Left cardiac atrium (tissue), 4 donors: ENCODE measurements at regions of chrX and their contacts with region 1.

Region 1: GRCh38 chrX:40647307-40648197 is at the start of gene CXorf38:
- DNase-seq: peak; percentile 95
- ATAC-seq: peak; percentile 91 to 92
- total RNA-seq, gene CXorf38: 6.7 to 8.2 TPM

Region 2: GRCh38 chrX:40459571-40460158 is 187.9 kb before region 1 on chrX:
- intact Hi-C with region 1: no loop called
- DNase-seq: no peak
- ATAC-seq: peak in 1 of 2 donors; percentile 22

Region 3: DNA sequence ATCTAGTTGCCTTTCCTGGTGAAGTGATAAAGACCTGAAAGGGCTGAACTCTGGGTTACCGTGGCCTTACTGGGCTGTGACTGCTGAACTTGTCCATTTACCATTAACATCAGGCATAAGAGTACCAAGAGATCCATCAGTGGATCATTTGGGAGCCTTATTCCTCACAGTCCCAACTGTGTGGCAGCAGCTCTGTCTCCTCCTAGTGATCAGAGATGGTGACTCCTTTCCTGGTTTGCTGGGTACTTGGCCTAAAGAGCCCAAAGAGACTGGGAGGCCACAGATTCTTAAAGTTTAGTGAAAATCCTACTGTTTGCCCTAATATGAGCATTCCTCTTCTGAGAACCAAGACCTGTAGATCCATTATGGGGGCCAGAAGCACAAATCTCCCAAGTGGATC is 123.1 kb before region 1 on chrX:
- intact Hi-C with region 1: no loop called
- DNase-seq: no peak
- ATAC-seq: no peak

Region 4: DNA sequence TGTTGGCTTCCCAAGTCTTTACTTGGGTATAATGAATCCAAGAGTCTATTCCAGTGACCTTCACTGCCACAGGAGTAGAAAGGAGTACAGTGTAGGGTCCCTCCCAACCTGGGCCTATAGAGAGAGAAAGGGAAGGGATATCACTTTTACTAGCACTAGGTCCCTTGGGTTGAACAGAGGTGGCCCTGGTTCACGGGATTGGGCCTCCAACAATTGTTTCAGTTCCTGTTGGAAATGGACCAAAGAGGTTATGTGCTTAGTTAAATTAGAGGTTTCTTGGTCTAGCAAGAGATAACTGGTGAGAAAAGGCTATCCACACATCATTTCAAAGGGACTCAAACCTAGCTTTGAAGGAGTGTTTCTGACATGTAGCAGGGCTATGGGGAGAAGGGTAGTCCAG is 144.9 kb after region 1 on chrX:
- intact Hi-C with region 1: loop called in 1 of 2 experiments (anchors 5 kb)
- DNase-seq: no peak
- ATAC-seq: no peak

Region 5: GRCh38 chrX:41110801-41111625 is 463.5 kb after region 1 on chrX:
- intact Hi-C with region 1: loop called in 1 of 2 experiments (anchors 5 kb)
- DNase-seq: no peak
- ATAC-seq: peak in 1 of 2 donors; percentile 60

Region 6: GRCh38 chrX:41259516-41259915 is 612.0 kb after region 1 on chrX:
- intact Hi-C with region 1: loop called in 1 of 2 experiments (anchors 10 kb)
- DNase-seq: no peak
- ATAC-seq: no peak